Left lung (tissue), 14 donors: ENCODE measurements at regions of chr2 and their contacts with region 1.

Region 1: GRCh38 chr2:15636972-15637785 is 45.5 kb downstream of the DDX1 start:
- DNase-seq: peak in 3 of 4 donors; percentile 57 to 89 (median 76)
- ATAC-seq: peak; percentile 93
- H3K4me3 ChIP-seq: no peak overlapping the region
- H3K27ac ChIP-seq: no peak overlapping the region
- H3K4me1 ChIP-seq: peaks cover 0 to 27% of the 10 kb centered on the region in 2 donors
- H3K27me3 ChIP-seq: no peaks in the 10 kb centered on the region
- CTCF ChIP-seq: peak; percentile 61 to 81

Region 2: DNA sequence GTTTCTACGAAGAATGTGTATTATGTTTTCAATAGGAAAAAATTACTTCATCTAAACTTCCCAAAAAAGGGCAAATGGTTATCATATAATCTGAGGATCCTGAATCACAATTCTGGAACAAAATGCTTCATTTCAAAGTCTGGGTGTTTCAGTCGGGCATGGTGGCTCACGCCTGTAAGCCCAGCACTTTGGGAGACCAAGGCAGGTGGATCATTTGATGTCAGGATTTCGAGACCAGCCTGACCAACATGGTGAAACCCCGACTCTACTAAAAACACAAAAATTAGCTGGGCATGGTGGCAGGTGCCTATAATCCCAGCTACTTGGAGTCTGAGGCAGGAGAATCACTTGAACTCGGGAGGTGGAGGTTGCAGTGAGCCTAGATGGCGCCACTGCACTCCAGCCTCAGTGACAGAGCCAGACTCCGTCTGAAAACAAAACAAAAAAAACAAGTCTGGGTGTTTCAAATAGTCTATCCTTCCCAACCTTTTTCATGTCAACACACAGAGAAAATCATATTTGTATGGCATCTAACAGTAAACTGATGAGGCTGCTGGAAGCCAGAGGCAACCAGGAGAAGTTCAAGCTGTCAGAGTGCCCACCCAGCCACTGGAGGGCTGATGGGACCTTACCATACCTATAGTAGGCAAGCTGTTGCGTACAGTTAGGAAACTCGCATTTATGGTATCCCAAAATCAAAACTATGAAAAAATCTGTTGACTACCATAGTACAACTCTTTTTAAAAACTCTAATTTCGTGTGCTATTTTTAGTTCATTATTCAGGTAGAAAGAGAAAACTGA is 90.7 kb before region 1 on chr2:
- intact Hi-C with region 1: no loop called
- DNase-seq: no peak
- ATAC-seq: no peak
- H3K4me3 ChIP-seq: no peak overlapping the region
- H3K27ac ChIP-seq: no peak overlapping the region
- H3K4me1 ChIP-seq: no peaks in the 10 kb centered on the region
- H3K27me3 ChIP-seq: no peaks in the 10 kb centered on the region
- CTCF ChIP-seq: no peak

Region 3: DNA sequence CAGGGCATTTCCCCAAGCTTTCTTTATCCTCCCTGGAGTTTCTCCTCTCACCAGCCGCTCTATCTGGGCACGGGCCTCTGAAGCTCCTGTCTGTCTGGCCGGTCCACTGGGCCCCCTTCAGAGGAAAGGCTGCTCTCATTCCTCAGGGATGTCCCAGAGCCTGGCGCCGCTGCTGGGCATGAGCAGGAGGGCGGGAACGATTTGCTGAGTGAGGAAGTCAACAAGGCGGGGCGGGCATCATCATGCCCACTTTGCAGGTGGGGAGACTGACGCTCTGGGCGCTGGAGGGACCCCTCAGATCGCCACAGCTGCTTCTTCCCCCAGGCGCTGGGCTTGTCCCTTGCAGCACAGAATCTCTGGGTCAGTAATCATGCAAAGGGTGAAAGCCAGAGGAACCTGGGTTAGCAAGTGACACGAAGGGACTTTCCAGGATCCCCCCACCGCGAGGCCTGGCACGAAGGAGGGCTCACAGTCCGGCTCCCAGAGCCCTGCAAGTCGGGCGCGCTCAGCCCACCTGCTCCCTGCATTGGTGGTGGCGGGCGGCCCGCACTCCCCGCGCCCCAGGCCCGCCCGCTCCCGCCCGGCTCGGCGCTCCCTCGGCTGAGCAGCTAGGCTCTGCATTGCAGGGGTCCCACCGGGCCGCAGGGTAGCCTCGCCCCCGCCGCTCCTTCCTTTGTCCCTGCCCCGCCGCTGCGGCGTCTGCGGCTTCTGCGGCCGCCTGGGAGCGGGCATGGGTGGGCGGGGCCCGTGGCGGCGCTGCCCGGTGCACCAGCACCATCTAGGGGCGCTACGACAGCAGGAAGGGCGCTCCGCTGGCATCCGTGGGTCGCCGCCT is 870.7 kb after region 1 on chr2:
- intact Hi-C with region 1: loop called in 1 of 2 experiments (anchors 10 kb)
- DNase-seq: peak; percentile 22 to 87 (median 51)
- ATAC-seq: peak; percentile 98
- H3K4me3 ChIP-seq: peak overlapping the region; percentile 13 to 23
- H3K27ac ChIP-seq: no peak overlapping the region
- H3K4me1 ChIP-seq: peaks cover 7 to 8% of the 10 kb centered on the region in 2 donors
- H3K27me3 ChIP-seq: peaks cover 19 to 38% of the 10 kb centered on the region in 2 donors
- CTCF ChIP-seq: peak; percentile 45 to 58